OCI-LY7 (cell line): ENCODE measurements at regions of chr12 and their contacts with region 1.

Region 1: DNA sequence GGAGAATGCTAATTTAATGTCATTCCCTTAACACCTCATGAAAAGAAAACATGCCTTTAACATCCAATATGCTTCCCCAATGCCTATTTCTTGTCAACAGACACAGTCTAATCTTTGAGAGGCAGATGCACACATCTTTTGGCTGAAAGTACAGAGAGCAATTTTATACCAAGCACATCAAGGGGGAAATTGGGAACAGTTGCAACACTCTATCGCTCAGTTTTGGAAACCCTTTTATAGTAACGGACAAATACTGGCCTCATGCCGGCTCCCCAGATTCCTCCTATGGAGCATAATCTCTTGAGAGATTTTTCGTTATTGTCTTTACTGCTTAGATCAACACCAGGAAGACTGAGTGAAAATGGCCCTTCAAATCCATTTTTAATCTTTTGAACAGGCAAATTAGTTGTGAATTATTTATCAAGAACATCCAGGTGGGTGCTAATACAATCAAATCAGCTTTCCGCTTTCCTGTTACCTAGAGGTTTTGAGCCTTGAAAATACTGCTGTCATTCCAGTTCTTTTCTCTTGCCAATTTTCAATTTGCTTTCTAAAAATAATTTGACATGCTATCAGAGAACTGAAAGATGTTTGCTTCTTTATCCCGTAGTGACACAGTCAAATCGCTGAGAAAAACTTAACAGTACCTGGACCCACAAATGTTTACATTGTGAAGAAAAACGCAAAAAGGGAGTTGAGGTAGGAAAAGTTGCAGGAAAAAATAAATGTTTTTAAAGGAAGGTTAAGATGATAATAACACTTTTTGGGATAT is 60.7 kb upstream of the CAND1 start:
- DNase-seq: no peak
- H3K4me3 ChIP-seq: no peak overlapping the region
- H3K27ac ChIP-seq: no peak overlapping the region
- H3K4me1 ChIP-seq: no peaks in the 10 kb centered on the region
- CTCF ChIP-seq: no peak

Region 2: DNA sequence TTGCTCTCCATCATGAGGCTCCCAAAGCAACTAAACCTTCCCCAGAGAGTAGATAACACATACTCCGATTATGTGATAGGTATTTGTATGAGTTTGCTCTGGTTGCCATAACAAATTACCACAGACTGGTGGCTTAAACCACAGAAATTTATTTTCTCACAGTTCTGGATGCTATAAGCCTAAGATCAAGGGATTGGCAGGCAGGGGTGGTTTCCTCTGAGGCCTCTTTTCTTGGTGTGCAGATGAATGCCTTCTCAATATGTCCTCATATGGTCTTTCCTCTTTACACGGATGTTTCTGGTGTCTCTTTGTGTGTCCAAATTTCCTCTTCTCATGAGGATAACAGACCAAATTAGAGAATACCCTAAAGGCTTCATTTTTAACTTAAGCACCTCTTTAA is 243.9 kb before region 1 on chr12:
- CTCF ChIA-PET with region 1: no interaction called
- POLR2A ChIA-PET with region 1: no interaction called
- intact Hi-C with region 1: no loop called
- DNase-seq: no peak
- H3K4me3 ChIP-seq: no peak overlapping the region
- H3K27ac ChIP-seq: no peak overlapping the region
- H3K4me1 ChIP-seq: no peaks in the 10 kb centered on the region
- CTCF ChIP-seq: no peak

Region 3: DNA sequence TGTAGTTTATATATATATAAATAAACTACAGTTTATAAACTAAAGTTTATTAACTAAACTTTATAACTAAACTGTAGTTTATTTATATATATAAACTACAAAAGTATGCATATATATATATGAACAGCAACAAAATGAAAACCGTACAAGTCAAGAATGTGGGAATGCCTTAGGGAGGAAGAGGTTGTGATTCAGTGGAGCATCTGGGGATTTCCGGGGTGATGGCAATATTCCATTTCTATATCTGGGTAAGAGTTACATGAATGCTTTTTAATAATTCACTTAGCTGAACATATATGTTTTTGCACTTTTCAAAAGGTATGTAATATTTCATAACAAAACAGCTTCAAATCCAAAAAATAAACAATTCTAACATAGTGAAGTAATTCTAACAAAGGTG is 30.6 kb after region 1 on chr12:
- CTCF ChIA-PET with region 1: no interaction called
- POLR2A ChIA-PET with region 1: no interaction called
- intact Hi-C with region 1: loop called (anchors 1 kb)
- DNase-seq: no peak
- H3K4me3 ChIP-seq: no peak overlapping the region
- H3K27ac ChIP-seq: no peak overlapping the region
- H3K4me1 ChIP-seq: no peaks in the 10 kb centered on the region
- CTCF ChIP-seq: no peak